Left ventricle myocardium superior (tissue), 1 donor: ENCODE measurements at regions of chr1 and their contacts with region 1.

Region 1: GRCh38 chr1:150363426-150364230 is at the start of gene RPRD2:
- DNase-seq: peak; percentile 99
- ATAC-seq: peak; percentile 98
- total RNA-seq, gene RPRD2: 24.4 TPM

Region 2: DNA sequence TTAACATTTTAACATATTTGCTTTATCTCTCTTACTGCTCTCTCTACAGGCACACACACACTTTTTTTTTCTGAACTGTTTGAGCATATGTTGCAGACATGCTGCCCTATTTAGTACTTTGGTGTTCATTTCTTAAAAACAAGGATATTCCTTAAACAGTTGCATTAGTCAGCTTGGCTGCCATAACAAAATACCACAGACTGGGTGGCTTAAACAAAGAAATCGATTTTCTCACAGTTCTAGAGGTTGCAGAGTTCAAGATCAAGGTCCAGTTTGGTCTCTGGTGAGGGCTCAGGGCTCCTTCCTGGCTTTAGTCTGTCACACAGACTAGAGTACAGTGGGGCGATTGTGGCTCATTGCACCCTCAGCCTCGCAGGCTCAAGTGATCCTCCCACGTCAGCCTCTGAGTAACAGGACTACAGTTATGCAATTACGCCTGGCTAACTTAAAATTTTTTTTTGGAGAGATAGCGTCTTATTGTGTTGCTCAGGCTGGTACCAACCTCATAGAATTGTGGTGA is 47.0 kb after region 1 on chr1:
- intact Hi-C with region 1: no loop called
- DNase-seq: no peak
- ATAC-seq: peak; percentile 22

Region 3: DNA sequence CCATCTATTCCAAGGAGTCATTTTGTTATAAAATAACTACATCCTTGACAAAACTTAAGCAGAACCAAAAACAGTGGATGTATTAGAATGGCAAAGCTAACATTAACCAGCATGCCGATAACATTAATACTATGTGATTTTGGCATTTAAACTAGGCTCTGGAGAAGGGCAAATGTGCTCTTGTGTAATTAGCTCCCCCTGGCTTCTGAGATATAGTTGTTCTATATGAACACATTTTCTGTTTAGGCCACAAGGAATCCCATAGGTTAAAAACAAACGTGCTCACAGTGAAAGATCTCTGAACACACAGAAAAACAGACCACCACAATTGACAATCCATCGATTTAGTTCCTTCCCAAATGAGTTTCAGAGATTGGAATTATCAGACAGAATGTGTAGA is 66.2 kb after region 1 on chr1:
- intact Hi-C with region 1: loop called (anchors 10 kb)
- DNase-seq: no peak
- ATAC-seq: no peak

Region 4: GRCh38 chr1:150813058-150813707 is 449.6 kb after region 1 on chr1:
- intact Hi-C with region 1: no loop called
- DNase-seq: peak; percentile 68
- ATAC-seq: peak; percentile 81